PC-3 (cell line): ENCODE measurements at regions of chr1 and their contacts with region 1.

Region 1: DNA sequence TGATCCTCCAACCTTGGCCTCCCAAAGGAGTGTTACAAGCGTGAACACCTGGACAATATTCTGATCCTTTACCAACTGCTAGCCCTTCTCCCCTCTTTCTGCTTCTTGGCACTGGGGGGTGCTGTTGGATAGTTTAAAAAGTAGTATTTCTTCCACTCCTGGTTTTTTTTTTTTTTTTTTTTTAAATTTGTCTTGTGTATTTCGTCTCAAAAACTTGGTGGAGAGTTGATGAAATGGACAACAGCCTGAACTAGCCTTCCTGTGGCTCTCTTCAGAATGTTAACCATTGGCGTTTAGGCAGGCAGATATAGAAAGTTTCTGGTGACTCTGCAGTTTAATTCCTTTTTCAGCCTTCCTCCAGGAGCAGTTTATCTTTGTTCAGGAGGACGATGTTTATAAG is 69.7 kb upstream of the USP24 start:
- DNase-seq: peak; percentile 67
- ATAC-seq: peak; percentile 68
- H3K4me3 ChIP-seq: no peak overlapping the region
- H3K27ac ChIP-seq: no peak overlapping the region
- H3K4me1 ChIP-seq: peaks cover 10% of the 10 kb centered on the region
- H3K27me3 ChIP-seq: no peaks in the 10 kb centered on the region
- CTCF ChIP-seq: peak; percentile 82

Region 2: GRCh38 chr1:55172272-55172671 is 112.6 kb before region 1 on chr1:
- CTCF ChIA-PET with region 1: no interaction called
- POLR2A ChIA-PET with region 1: no interaction called
- intact Hi-C with region 1: no loop called
- DNase-seq: no peak
- ATAC-seq: no peak
- H3K4me3 ChIP-seq: no peak overlapping the region
- H3K27ac ChIP-seq: no peak overlapping the region
- H3K4me1 ChIP-seq: no peaks in the 10 kb centered on the region
- H3K27me3 ChIP-seq: no peaks in the 10 kb centered on the region
- CTCF ChIP-seq: no peak

Region 3: GRCh38 chr1:55337801-55338447 is 53.1 kb after region 1 on chr1:
- CTCF ChIA-PET with region 1: interaction called, 8 read pairs
- POLR2A ChIA-PET with region 1: no interaction called
- intact Hi-C with region 1: loop called (anchors 1 kb)
- DNase-seq: peak; percentile 72
- ATAC-seq: peak; percentile 83
- H3K4me3 ChIP-seq: no peak overlapping the region
- H3K27ac ChIP-seq: no peak overlapping the region
- H3K4me1 ChIP-seq: no peaks in the 10 kb centered on the region
- H3K27me3 ChIP-seq: no peaks in the 10 kb centered on the region
- CTCF ChIP-seq: peak; percentile 72

Region 4: GRCh38 chr1:55478742-55479141 is 193.9 kb after region 1 on chr1:
- CTCF ChIA-PET with region 1: no interaction called
- POLR2A ChIA-PET with region 1: no interaction called
- intact Hi-C with region 1: loop called (anchors 10 kb)
- DNase-seq: peak; percentile 79
- ATAC-seq: peak; percentile 58
- H3K4me3 ChIP-seq: no peak overlapping the region
- H3K27ac ChIP-seq: no peak overlapping the region
- H3K4me1 ChIP-seq: peaks cover 13% of the 10 kb centered on the region
- H3K27me3 ChIP-seq: no peaks in the 10 kb centered on the region
- CTCF ChIP-seq: peak; percentile 70

Region 5: GRCh38 chr1:55833529-55834091 is 548.8 kb after region 1 on chr1:
- CTCF ChIA-PET with region 1: no interaction called
- POLR2A ChIA-PET with region 1: no interaction called
- intact Hi-C with region 1: loop called (anchors 10 kb)
- DNase-seq: no peak
- ATAC-seq: peak; percentile 31; the same call in 1 of the 2 replicates
- H3K4me3 ChIP-seq: no peak overlapping the region
- H3K27ac ChIP-seq: no peak overlapping the region
- H3K4me1 ChIP-seq: no peaks in the 10 kb centered on the region
- H3K27me3 ChIP-seq: no peaks in the 10 kb centered on the region
- CTCF ChIP-seq: no peak

Region 6: DNA sequence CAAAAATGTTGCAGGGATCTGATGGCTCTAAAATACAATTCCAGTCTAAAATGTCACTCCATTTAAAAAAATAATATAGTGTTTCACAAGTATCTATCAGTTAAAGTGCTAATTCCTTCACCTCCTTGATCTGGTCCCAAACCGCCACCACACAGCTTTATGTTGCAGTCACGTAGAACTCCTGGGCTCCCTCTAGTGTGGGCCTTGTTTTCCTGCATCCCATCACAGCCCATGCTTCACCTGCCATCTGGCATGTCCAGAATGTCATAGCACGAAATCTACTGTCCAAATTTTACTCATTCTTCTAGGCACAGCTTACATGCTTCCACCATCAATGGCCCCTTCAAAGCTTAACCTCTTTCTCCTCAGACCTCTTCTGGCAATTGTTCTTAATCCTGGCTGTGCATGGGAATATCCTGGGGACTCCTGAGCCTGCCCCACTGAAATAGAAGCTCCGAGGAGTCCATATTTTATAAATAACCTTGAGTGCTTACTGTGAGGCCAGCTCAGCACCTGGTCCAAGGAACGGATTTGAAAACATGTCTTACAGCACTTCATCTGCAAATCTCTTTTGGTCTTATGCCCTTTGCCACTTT is 1518.8 kb after region 1 on chr1:
- CTCF ChIA-PET with region 1: no interaction called
- POLR2A ChIA-PET with region 1: no interaction called
- intact Hi-C with region 1: loop called (anchors 5 kb)
- DNase-seq: peak; percentile 67
- ATAC-seq: peak; percentile 96
- H3K4me3 ChIP-seq: no peak overlapping the region
- H3K27ac ChIP-seq: no peak overlapping the region
- H3K4me1 ChIP-seq: no peaks in the 10 kb centered on the region
- H3K27me3 ChIP-seq: no peaks in the 10 kb centered on the region
- CTCF ChIP-seq: peak; percentile 80